ENCODE measurements at regions of chr2 and their contacts with region 1.

Region 1: GRCh38 chr2:25376750-25377621 is 35.3 kb upstream of the DNMT3A start:
- DNase-seq: peak; percentile 96
- ATAC-seq: peak; percentile 99
- H3K4me3 Mint-ChIP-seq: peak overlapping the region; percentile 71
- H3K27ac Mint-ChIP-seq: peak overlapping the region; percentile 97
- H3K4me1 Mint-ChIP-seq: peaks cover 40% of the 10 kb centered on the region
- H3K27me3 Mint-ChIP-seq: no peaks in the 10 kb centered on the region

Region 2: DNA sequence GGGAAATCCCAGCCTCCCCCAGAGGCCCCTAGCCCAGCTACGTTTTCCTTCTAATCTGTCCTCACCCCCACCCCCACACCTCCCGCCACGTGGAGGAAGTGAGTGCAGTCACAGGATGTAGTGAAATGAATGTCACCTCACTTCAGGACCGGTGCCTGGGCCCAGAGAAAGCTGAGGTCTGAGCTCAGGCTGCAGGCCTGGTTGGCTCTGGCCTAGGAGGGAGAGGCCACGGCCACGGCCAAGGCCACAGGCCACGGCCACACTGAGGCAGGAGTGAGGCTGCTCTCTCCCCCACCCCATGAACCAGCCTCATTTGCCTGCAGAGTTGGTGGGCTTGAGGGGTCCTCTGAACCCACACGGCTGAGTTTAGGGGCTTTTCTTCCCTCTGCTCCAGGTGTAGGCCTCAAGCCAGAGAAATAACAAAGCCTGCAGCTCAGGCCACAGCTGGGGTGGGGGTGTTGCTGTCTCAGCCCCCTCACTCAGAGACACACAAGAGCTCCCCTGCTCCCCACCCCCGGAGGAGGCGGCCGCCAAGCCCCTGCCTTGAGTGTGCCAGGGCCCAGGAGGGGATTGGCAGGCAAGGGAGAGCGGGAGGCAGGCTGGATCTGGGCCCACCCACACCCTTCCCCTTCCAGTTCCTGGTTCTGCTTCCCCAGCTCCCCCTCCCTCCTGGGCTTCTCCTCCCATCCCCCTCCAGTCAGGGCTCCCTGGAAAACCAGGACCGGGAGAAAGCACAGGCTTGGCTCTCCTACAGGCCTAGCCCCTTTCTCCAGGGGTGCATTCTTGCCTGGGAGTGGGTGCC is 62.3 kb before region 1 on chr2:
- CTCF ChIA-PET with region 1: interaction called, 20 read pairs
- POLR2A ChIA-PET with region 1: interaction called, 7 read pairs
- DNase-seq: peak; percentile 88
- ATAC-seq: peak; percentile 84
- H3K4me3 Mint-ChIP-seq: peak overlapping the region; percentile 81
- H3K27ac Mint-ChIP-seq: peak overlapping the region; percentile 97
- H3K4me1 Mint-ChIP-seq: peaks cover 54% of the 10 kb centered on the region
- H3K27me3 Mint-ChIP-seq: no peaks in the 10 kb centered on the region

Region 3: DNA sequence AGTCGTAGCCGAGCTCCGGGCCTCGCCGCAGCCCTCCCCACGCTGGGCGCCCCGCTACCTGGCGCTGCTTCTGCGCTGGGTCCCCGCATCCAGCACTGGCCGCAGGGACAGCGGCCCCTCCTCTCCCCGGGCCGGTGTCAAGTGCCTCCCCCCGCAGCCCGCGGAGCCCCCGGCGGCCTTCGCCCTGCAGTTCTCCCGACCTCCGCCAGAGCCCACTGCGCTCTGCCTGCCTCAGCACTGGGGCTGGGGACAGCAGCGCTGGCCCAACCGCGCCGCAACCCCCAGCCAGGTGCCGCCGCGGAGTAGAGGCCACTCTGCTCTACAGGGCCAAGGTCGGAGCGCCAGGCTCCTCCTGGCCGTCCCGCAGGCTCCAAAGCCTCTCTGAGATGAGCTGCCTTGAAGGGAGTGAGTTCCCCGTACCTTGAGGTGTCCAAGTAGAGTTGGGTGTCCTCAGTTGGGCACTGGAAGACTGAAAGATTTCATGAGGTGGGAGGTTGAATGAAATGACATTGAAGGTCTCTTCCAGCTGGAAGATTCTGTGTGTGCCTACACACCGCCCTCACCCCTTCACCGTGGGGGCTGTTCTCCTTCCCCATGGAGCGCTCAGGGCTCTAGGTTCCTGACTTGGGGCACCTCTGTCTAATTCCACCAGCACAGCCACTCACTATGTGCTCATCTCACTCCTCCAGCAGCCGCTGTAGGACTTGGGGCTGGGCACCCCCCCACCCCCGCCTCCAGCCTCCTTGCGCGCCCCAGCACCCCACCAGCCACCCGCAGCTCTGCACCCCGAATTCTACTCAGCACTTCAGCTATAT is 34.4 kb before region 1 on chr2:
- CTCF ChIA-PET with region 1: interaction called, 14 read pairs
- POLR2A ChIA-PET with region 1: interaction called, 4 read pairs
- DNase-seq: peak; percentile 89
- ATAC-seq: peak; percentile 87
- H3K4me3 Mint-ChIP-seq: peak overlapping the region; percentile 79
- H3K27ac Mint-ChIP-seq: peak overlapping the region; percentile 89
- H3K4me1 Mint-ChIP-seq: peaks cover 33% of the 10 kb centered on the region
- H3K27me3 Mint-ChIP-seq: no peaks in the 10 kb centered on the region

Region 4: GRCh38 chr2:25388491-25388890 is 11.5 kb after region 1 on chr2:
- CTCF ChIA-PET with region 1: interaction called, 24 read pairs
- POLR2A ChIA-PET with region 1: interaction called, 8 read pairs
- DNase-seq: peak; percentile 45
- ATAC-seq: peak; percentile 71
- H3K4me3 Mint-ChIP-seq: no peak overlapping the region
- H3K27ac Mint-ChIP-seq: peak overlapping the region; percentile 31
- H3K4me1 Mint-ChIP-seq: peaks cover 22% of the 10 kb centered on the region
- H3K27me3 Mint-ChIP-seq: no peaks in the 10 kb centered on the region

Region 5: DNA sequence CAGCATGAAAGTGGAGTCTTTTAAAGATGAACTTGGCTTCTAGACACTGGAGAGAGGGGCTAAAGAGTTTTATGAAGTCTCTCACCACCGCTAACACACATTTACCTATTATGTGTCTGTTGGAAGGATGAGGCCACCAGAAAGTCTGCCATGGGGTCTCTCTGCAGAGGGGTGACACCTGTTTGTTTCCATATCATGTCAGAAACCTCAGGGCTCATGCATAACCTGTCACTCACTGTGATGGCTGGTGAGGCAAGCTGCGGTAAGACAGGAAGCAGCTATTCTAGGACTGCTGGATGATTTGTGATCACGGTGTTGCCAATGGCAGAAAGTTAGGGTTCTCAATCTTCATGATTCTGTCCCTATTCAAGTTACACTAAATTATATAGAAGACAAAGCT is 25.5 kb after region 1 on chr2:
- CTCF ChIA-PET with region 1: interaction called, 28 read pairs
- POLR2A ChIA-PET with region 1: no interaction called
- DNase-seq: peak; percentile 69
- ATAC-seq: peak; percentile 70
- H3K4me3 Mint-ChIP-seq: peak overlapping the region; percentile 43
- H3K27ac Mint-ChIP-seq: peak overlapping the region; percentile 98
- H3K4me1 Mint-ChIP-seq: peaks cover 41% of the 10 kb centered on the region
- H3K27me3 Mint-ChIP-seq: no peaks in the 10 kb centered on the region

Region 6: GRCh38 chr2:25453199-25453905 is 76.4 kb after region 1 on chr2:
- CTCF ChIA-PET with region 1: interaction called, 20 read pairs
- POLR2A ChIA-PET with region 1: no interaction called
- DNase-seq: peak; percentile 34
- ATAC-seq: peak; percentile 87
- H3K4me3 Mint-ChIP-seq: peak overlapping the region; percentile 36
- H3K27ac Mint-ChIP-seq: peak overlapping the region; percentile 83
- H3K4me1 Mint-ChIP-seq: peaks cover 28% of the 10 kb centered on the region
- H3K27me3 Mint-ChIP-seq: no peaks in the 10 kb centered on the region

Region 7: DNA sequence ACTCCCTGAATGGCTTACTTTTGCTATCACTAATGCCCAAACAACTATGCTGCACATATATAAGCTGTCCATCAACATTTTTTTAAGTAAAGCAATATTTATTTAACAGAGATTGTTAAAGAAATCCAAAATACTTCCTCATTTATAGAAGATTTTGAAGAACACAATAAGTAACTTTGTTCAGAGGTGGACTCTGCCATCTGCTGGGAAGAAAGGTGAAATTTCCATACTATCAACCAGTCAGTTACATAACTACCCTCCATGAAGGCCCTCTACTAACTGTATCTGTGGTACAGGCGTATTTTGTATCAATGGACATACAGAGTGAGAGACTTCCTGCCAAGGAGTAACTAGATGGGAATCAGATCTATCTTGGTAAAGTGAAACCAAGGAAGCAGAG is 190.4 kb after region 1 on chr2:
- CTCF ChIA-PET with region 1: interaction called, 17 read pairs
- POLR2A ChIA-PET with region 1: no interaction called
- DNase-seq: peak; percentile 52
- ATAC-seq: peak; percentile 74
- H3K4me3 Mint-ChIP-seq: no peak overlapping the region
- H3K27ac Mint-ChIP-seq: peak overlapping the region; percentile 73
- H3K4me1 Mint-ChIP-seq: peaks cover 19% of the 10 kb centered on the region
- H3K27me3 Mint-ChIP-seq: no peaks in the 10 kb centered on the region

Measured in activated CD8-positive, alpha-beta T cell treated with anti-CD3 and anti-CD28 coated beads, Interleukin-2, amount 10 ng/mL, durations not matched to agents 7 days and 5 days (primary cell).